ENCODE measurements at regions of chr10 and their contacts with region 1.

Region 1: DNA sequence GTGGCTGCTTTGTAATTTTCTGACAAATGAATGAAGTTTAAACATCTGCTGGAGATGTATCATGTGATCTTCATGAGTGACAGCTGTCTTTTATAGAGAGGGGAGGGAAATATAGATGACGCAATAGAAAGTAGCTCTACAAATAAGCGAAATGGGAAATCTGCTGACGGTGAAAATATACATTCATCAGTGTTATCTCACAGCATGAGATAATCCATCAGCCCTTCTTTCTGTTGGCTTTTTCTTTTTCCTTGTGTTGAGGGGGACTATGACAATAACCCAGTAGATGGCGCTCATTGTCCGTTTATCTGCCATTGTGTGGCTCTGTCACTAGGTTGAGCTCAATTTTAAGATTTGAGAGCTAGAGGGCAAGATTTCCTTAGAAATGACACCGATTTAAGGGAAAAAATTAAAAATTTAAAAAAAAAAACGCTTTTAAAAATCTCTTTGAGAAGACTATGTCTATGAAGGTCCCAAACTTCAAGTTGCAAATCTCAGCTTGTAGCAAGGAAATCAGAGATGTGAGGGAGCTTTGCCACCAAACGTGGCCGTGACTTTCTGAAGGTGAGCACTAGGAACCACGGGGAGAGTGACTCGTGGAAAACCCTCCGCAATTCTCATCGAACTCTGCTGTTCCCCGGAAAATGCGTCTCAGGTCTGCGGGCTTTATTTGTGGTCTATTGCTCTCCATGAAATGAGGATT is 114.6 kb upstream of the SFMBT2 start:
- DNase-seq: peak; percentile 69 to 86
- H3K4me3 ChIP-seq: no peak overlapping the region
- H3K4me3 Mint-ChIP-seq: peak overlapping the region; percentile 15
- H3K27ac Mint-ChIP-seq: no peak overlapping the region
- H3K4me1 ChIP-seq: no peaks in the 10 kb centered on the region; the same call in 1 of the 2 replicates
- H3K4me1 Mint-ChIP-seq: peaks cover 9% of the 10 kb centered on the region
- H3K27me3 ChIP-seq: peaks cover 4% of the 10 kb centered on the region; the same call in 1 of the 2 replicates
- H3K27me3 Mint-ChIP-seq: peaks cover 20% of the 10 kb centered on the region
- CTCF ChIP-seq: peak; percentile 86 to 95

Region 2: GRCh38 chr10:7541137-7542095 is 16.0 kb after region 1 on chr10:
- CTCF ChIA-PET with region 1: interaction called, 18 read pairs
- POLR2A ChIA-PET with region 1: no interaction called
- intact Hi-C with region 1: loop called (anchors 1 kb)
- DNase-seq: peak; percentile 92 to 95
- H3K4me3 ChIP-seq: no peak overlapping the region
- H3K4me3 Mint-ChIP-seq: peak overlapping the region; percentile 56
- H3K27ac Mint-ChIP-seq: peak overlapping the region; percentile 98
- H3K4me1 ChIP-seq: peaks cover 41% of the 10 kb centered on the region
- H3K4me1 Mint-ChIP-seq: peaks cover 30% of the 10 kb centered on the region
- H3K27me3 ChIP-seq: no peaks in the 10 kb centered on the region
- H3K27me3 Mint-ChIP-seq: no peaks in the 10 kb centered on the region
- CTCF ChIP-seq: peak; percentile 41 to 59

Region 3: GRCh38 chr10:7622969-7623368 is 97.5 kb after region 1 on chr10:
- CTCF ChIA-PET with region 1: interaction called, 4 read pairs
- POLR2A ChIA-PET with region 1: no interaction called
- intact Hi-C with region 1: loop called (anchors 1 kb)
- DNase-seq: peak in 1 of 2 experiments; percentile 42
- H3K4me3 ChIP-seq: no peak overlapping the region
- H3K4me3 Mint-ChIP-seq: no peak overlapping the region
- H3K27ac Mint-ChIP-seq: no peak overlapping the region
- H3K4me1 ChIP-seq: no peaks in the 10 kb centered on the region
- H3K4me1 Mint-ChIP-seq: no peaks in the 10 kb centered on the region
- H3K27me3 ChIP-seq: no peaks in the 10 kb centered on the region
- H3K27me3 Mint-ChIP-seq: peaks cover 3% of the 10 kb centered on the region
- CTCF ChIP-seq: peak in 1 of 2 experiments; percentile 46

Region 4: DNA sequence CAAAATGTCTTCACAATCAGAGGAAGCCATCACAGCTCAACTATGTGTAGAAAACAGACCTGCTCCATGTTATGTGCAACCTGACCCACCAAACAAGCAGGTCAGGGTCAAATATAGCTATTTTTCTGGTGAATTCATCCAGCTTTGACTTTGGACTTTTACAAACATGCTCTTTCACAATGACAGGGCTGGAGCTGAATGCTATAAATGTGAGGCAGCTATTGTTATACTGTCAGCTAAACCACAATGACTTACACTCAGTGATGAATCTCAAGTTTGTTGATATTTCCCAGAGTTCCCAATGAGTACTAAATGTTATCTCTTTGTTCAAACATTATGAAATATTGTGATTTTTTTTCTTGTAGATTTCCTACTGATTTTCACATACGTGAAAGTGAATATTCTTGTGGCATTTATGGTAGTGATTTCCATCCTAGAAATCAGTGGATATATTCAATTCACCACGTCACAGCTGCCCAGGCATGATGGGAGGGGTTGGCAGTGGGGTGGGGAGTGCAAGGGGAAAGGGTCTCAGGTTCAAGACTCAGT is 175.2 kb after region 1 on chr10:
- CTCF ChIA-PET with region 1: interaction called, 13 read pairs
- POLR2A ChIA-PET with region 1: no interaction called
- intact Hi-C with region 1: no loop called
- DNase-seq: peak; percentile 61 to 80
- H3K4me3 ChIP-seq: no peak overlapping the region
- H3K4me3 Mint-ChIP-seq: no peak overlapping the region
- H3K27ac Mint-ChIP-seq: peak overlapping the region; percentile 52
- H3K4me1 ChIP-seq: peaks cover 8% of the 10 kb centered on the region
- H3K4me1 Mint-ChIP-seq: no peaks in the 10 kb centered on the region
- H3K27me3 ChIP-seq: no peaks in the 10 kb centered on the region
- H3K27me3 Mint-ChIP-seq: no peaks in the 10 kb centered on the region
- CTCF ChIP-seq: no peak

Region 5: GRCh38 chr10:7787857-7788638 is 262.6 kb after region 1 on chr10 and contains the starts of genes ATP5F1C and KIN:
- CTCF ChIA-PET with region 1: interaction called, 19 read pairs
- POLR2A ChIA-PET with region 1: no interaction called
- intact Hi-C with region 1: loop called (anchors 1 kb)
- DNase-seq: peak; percentile 99
- H3K4me3 ChIP-seq: peak within 1 kb of the TSS; percentile 100
- H3K4me3 Mint-ChIP-seq: no peak within 1 kb of the TSS
- H3K27ac Mint-ChIP-seq: no peak within 1 kb of the TSS
- H3K4me1 ChIP-seq: peaks cover 8% of the 10 kb centered on the region; the same call in 1 of the 2 replicates
- H3K4me1 Mint-ChIP-seq: peaks cover 26% of the 10 kb centered on the region
- H3K27me3 ChIP-seq: no peaks in the 10 kb centered on the region
- H3K27me3 Mint-ChIP-seq: no peaks in the 10 kb centered on the region
- CTCF ChIP-seq: no peak
- total RNA-seq, gene ATP5F1C: 568 and 613 TPM in 2 replicates
- total RNA-seq, gene KIN: 27.8 and 27.9 TPM in 2 replicates

Region 6: DNA sequence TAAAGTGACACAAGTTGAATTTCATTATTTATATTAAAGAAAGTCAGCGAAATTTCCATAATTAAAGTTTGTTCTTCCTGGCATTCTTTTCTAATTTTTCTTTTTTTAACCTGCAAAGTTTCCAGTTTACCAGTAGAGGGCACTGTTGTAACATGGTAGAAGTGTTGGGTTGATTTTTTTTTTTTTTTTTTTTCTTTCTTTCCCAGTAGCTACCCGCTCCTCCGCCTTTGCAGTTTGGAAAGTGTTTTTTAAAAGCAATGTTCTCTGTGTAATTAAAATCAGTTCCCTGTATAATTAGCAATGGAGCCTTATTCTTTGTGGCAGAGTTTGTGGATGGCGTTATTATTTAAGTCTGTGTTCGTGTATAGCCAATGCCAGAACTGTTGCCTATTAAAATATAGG is 346.6 kb after region 1 on chr10:
- CTCF ChIA-PET with region 1: interaction called, 9 read pairs
- POLR2A ChIA-PET with region 1: no interaction called
- intact Hi-C with region 1: loop called (anchors 10 kb)
- DNase-seq: peak in 1 of 2 experiments; percentile 21
- H3K4me3 ChIP-seq: peak overlapping the region; percentile 25
- H3K4me3 Mint-ChIP-seq: peak overlapping the region; percentile 66
- H3K27ac Mint-ChIP-seq: no peak overlapping the region
- H3K4me1 ChIP-seq: peaks cover 26% of the 10 kb centered on the region
- H3K4me1 Mint-ChIP-seq: peaks cover 11% of the 10 kb centered on the region
- H3K27me3 ChIP-seq: no peaks in the 10 kb centered on the region
- H3K27me3 Mint-ChIP-seq: no peaks in the 10 kb centered on the region
- CTCF ChIP-seq: peak; percentile 83

Region 7: GRCh38 chr10:9209105-9209798 is 1683.8 kb after region 1 on chr10:
- CTCF ChIA-PET with region 1: interaction called, 10 read pairs
- POLR2A ChIA-PET with region 1: no interaction called
- intact Hi-C with region 1: loop called (anchors 1 kb)
- DNase-seq: peak; percentile 63 to 77
- H3K4me3 ChIP-seq: no peak overlapping the region
- H3K4me3 Mint-ChIP-seq: no peak overlapping the region
- H3K27ac Mint-ChIP-seq: no peak overlapping the region
- H3K4me1 ChIP-seq: no peaks in the 10 kb centered on the region
- H3K4me1 Mint-ChIP-seq: peaks cover 6% of the 10 kb centered on the region
- H3K27me3 ChIP-seq: no peaks in the 10 kb centered on the region; the same call in 1 of the 2 replicates
- H3K27me3 Mint-ChIP-seq: peaks cover 3% of the 10 kb centered on the region
- CTCF ChIP-seq: peak; percentile 89 to 96

Measured in Caco-2 (cell line).